MCF 10A (cell line): ENCODE measurements at regions of chr1 and their contacts with region 1.

Region 1: DNA sequence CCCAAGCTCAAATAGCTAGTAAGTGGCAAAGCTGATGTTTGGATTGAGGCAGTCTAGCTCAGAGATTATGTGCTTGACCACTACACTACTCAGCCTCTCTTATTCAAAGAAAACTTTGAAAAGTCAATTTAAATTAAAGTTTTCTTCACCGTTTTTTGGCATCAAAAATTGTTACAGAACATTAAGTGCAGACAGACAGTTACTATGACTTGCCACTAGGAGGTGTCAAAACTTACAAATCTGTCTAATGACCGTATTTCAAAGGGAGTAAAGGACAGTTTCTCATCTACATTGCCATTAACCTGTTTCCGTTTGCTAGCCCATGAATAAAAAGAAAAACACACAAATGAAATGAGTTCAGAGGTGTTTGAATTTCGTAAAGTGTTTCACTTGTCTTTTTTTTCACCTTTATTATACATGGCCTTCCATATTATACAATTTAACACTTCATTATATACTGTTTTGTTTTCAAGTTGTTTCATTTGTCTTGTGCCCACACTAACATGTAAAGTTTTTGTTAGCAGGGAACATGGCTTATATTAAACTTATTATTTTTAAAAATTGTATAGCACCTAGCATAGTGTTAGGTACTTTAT is 57.4 kb upstream of the MTF2 start:
- DNase-seq: peak; percentile 60
- H3K4me3 Mint-ChIP-seq: no peak overlapping the region
- H3K27ac Mint-ChIP-seq: no peak overlapping the region
- H3K4me1 Mint-ChIP-seq: peaks cover under 1% of the 10 kb centered on the region
- H3K27me3 Mint-ChIP-seq: peaks cover 69% of the 10 kb centered on the region
- CTCF ChIP-seq: peak; percentile 45

Region 2: GRCh38 chr1:92975551-92976232 is 45.9 kb before region 1 on chr1:
- CTCF ChIA-PET with region 1: no interaction called
- POLR2A ChIA-PET with region 1: no interaction called
- intact Hi-C with region 1: no loop called
- DNase-seq: no peak
- H3K4me3 Mint-ChIP-seq: no peak overlapping the region
- H3K27ac Mint-ChIP-seq: no peak overlapping the region
- H3K4me1 Mint-ChIP-seq: no peaks in the 10 kb centered on the region
- H3K27me3 Mint-ChIP-seq: no peaks in the 10 kb centered on the region
- CTCF ChIP-seq: no peak

Region 3: GRCh38 chr1:93007941-93008577 is 13.6 kb before region 1 on chr1:
- CTCF ChIA-PET with region 1: interaction called, 12 read pairs
- POLR2A ChIA-PET with region 1: no interaction called
- intact Hi-C with region 1: no loop called
- DNase-seq: no peak
- H3K4me3 Mint-ChIP-seq: no peak overlapping the region
- H3K27ac Mint-ChIP-seq: no peak overlapping the region
- H3K4me1 Mint-ChIP-seq: no peaks in the 10 kb centered on the region
- H3K27me3 Mint-ChIP-seq: peaks cover 32% of the 10 kb centered on the region
- CTCF ChIP-seq: no peak

Region 4: DNA sequence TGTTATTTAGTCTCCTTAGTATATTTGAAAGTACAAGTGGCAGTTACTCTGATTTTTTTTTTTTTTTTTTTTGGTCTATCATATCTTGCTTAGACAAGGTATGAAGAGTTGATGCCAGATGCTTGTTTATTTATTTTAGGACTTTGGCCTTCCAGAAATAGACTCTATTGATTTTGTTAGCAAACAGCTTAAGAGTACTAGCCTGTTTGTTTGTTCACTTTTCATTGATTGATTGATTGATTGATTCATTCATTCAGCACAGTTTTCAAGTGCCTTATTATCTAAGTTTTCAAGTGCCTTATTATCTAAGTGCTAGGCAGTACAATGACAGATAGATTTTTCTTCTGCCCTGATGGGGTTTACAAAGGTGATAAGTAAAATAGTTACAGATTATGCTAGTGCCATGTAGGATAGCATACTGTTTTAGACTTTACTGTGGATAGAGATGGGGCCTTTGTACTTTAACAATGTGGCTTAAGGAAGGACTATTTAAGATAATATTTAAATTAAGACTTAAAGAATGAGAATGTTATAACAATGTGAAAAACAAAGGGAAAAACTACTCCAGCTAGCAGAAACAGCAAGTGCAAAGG is 108.0 kb after region 1 on chr1:
- CTCF ChIA-PET with region 1: no interaction called
- POLR2A ChIA-PET with region 1: no interaction called
- intact Hi-C with region 1: no loop called
- DNase-seq: no peak
- H3K4me3 Mint-ChIP-seq: no peak overlapping the region
- H3K27ac Mint-ChIP-seq: no peak overlapping the region
- H3K4me1 Mint-ChIP-seq: no peaks in the 10 kb centered on the region
- H3K27me3 Mint-ChIP-seq: no peaks in the 10 kb centered on the region
- CTCF ChIP-seq: no peak

Region 5: GRCh38 chr1:93179886-93180722 is 158.5 kb after region 1 on chr1 and contains the start of gene TMED5:
- CTCF ChIA-PET with region 1: no interaction called
- POLR2A ChIA-PET with region 1: no interaction called
- intact Hi-C with region 1: loop called (anchors 5 kb)
- DNase-seq: peak; percentile 99
- H3K4me3 Mint-ChIP-seq: peak within 1 kb of the TSS; percentile 93
- H3K27ac Mint-ChIP-seq: peak within 1 kb of the TSS; percentile 100
- H3K4me1 Mint-ChIP-seq: peaks cover 34% of the 10 kb centered on the region
- H3K27me3 Mint-ChIP-seq: no peaks in the 10 kb centered on the region
- CTCF ChIP-seq: peak; percentile 8
- total RNA-seq, gene TMED5: 80.5 and 86.2 TPM in 2 replicates